Dendritic cell treated with granulocyte-macrophage colony-stimulating factor and Interleukin-4, amounts not matched to agents 40 ng/mL and 50 ng/mL, for 4 days (primary cell): ENCODE measurements at regions of chr11 and their contacts with region 1.

Region 1: GRCh38 chr11:60887556-60887955 is 18.8 kb downstream of the PRPF19 start:
- H3K4me3 Mint-ChIP-seq: no peak overlapping the region
- H3K27ac Mint-ChIP-seq: no peak overlapping the region
- H3K4me1 Mint-ChIP-seq: peaks cover 30% of the 10 kb centered on the region
- H3K27me3 Mint-ChIP-seq: no peaks in the 10 kb centered on the region

Region 2: DNA sequence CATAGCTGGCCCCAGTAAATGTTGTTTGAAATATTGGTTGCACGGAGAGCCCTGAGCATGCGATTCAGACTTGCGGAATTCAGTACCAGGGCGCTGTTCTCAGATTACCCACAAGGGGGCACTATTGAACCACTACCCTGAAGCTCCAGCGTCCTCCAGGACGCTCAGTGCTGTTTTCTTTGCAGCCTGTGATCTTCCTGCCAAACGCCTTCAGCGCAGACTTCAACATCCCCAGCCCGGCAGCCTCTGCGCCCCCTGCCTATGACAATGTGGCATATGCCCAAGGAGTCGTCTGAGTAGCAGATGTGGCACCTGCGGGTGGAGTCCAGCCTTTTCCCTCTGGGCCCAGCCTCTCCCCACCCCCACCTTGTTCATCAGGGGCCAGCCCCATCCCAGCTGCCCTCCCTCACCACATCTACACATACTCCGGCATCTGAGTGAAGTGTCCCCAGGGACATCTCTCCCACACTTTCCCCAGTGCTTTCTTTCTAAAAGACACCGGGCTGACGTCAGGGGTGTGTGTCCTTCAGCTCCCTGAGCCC is 112.1 kb before region 1 on chr11:
- intact Hi-C with region 1: loop called (anchors 1 kb)
- H3K4me3 Mint-ChIP-seq: no peak overlapping the region
- H3K27ac Mint-ChIP-seq: no peak overlapping the region
- H3K4me1 Mint-ChIP-seq: peaks cover 13% of the 10 kb centered on the region
- H3K27me3 Mint-ChIP-seq: peaks cover 25% of the 10 kb centered on the region

Region 3: DNA sequence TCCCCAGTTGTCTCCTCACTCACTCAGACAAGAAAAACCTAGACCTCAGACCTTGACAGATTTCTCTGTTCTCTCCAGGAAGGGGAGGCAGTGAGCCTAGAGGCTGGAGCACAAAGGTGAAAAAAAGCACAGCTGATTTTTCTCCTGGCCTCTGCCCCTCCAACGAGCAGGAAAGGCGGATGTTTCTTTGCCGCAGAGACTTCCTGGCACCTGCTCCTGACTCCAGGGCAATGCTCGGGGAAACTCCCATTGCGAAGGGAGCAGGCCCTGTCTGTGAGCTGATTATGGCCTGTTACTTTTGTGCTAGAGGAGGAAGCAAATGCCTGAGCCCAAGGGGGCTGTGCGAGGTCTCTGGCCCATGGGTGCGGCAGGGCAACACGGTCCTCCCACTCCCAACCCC is 77.0 kb before region 1 on chr11:
- intact Hi-C with region 1: no loop called
- H3K4me3 Mint-ChIP-seq: no peak overlapping the region
- H3K27ac Mint-ChIP-seq: no peak overlapping the region
- H3K4me1 Mint-ChIP-seq: peaks cover 27% of the 10 kb centered on the region
- H3K27me3 Mint-ChIP-seq: peaks cover 28% of the 10 kb centered on the region

Region 4: GRCh38 chr11:60855726-60856633 is 31.6 kb before region 1 on chr11 and contains the start of gene PTGDR2:
- intact Hi-C with region 1: no loop called
- H3K4me3 Mint-ChIP-seq: no peak within 1 kb of the TSS
- H3K27ac Mint-ChIP-seq: peak within 1 kb of the TSS; percentile 7
- H3K4me1 Mint-ChIP-seq: peaks cover 43% of the 10 kb centered on the region
- H3K27me3 Mint-ChIP-seq: peaks cover 26% of the 10 kb centered on the region

Region 5: DNA sequence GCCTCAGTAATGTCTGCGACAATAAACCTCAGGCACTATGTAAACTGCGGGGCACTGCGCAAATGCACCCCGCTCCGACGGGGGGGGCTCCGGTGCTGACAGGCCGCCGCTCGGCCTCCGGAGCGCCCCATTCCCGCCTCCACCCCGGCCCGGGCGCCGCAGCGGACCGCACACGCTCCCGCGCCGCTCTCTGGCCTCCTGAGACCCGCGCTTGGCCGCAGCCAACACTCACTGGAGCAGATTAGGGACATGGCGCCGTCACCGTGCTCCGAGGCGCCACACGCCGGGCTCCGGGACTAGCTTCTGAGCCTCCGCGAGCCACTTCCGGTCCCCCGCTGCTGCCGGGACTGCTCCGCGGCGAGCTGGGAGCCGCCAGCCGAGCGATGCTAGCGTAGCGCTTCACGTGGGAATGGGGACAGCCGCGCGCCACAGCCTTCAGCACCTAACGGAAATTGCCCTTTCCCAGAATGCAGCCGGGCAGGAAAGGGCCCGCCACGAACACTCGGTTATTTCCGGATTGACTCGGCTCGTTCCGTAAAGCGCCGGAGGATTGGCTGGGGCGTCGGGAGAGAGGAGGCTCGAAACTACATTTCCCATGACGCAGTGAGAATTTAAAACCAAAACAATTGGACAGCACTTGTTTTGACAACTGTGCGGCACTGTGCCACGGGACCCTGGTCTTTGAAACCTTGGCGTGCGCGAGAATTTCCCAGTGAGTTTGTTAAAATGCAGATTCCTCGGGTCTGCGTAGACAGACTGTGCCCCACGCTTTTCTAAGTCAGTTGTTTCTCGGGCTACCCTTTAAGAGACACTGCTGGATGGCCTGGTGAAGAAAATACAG is 18.8 kb after region 1 on chr11 and contains the start of gene PRPF19:
- intact Hi-C with region 1: no loop called
- H3K4me3 Mint-ChIP-seq: peak within 1 kb of the TSS; percentile 96
- H3K27ac Mint-ChIP-seq: peak within 1 kb of the TSS; percentile 91
- H3K4me1 Mint-ChIP-seq: peaks cover 75% of the 10 kb centered on the region
- H3K27me3 Mint-ChIP-seq: no peaks in the 10 kb centered on the region